Activated B cell treated with CpG ODN at 0.5 μM for 24 hours (primary cell): ENCODE measurements at regions of chr3 and their contacts with region 1.

Region 1: DNA sequence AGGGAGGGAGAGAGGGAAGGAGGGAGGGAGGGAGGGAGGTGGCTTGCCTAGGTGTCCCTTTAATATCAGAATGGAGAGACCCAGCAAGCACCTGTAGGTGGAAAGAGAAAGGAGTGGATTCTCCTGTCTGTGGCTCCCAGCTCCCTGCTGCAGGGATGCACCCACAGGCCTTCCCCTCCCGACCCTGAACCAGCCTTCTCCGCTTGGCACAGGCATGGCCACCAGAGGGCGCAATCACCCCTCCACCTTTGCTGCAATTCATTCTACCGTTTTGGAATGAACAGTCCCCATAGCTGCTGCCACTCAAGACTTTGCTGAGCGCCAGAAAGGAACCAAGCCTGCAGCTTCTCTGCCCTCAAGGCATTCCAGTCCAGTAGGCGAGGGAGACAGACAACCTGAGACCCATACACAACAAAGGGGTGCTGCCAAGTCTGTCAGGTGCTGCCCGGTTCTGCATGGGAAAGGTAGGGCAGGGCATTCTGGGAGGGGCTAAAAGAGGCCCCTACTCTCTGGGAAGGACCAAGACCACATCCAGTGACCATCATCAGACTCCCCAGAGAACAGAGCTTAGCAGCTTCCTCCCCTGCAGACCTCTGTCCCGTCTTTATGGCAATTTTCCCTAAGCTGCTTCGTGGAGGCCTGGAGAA is 4.9 kb downstream of the TLR9 start:
- DNase-seq: peak; percentile 80
- ATAC-seq: peak; percentile 59
- H3K4me3 Mint-ChIP-seq: peak overlapping the region; percentile 50
- H3K27ac Mint-ChIP-seq: peak overlapping the region; percentile 53
- H3K4me1 Mint-ChIP-seq: peaks cover 88% of the 10 kb centered on the region
- H3K27me3 Mint-ChIP-seq: no peaks in the 10 kb centered on the region
- CTCF ChIP-seq: no peak

Region 2: DNA sequence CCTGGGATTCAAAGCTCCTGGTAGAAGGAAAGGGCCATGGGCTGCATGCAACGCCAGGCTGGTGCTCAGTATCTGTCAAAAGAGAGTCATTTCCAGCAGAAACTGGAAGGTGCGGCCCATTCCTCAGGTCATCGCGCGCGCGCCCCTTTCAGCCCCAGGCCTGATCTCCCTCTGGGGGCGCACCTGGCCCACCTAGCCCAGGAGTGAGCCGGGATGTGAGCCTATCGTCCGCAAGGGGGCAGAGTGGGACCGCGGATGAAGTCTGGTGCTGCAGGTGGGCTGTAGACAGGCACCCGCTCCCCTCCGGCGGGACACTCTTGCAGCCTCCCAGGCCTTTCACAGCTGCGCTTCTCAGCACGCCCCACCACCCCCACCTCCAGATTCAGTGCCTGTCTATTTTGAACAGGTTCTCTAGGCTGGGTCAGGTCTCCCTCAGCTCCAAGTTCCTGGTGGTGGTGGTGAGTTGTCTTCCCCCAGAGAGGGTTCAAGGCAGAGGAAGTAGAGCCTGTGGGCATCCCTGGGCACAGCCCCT is 219.0 kb before region 1 on chr3:
- CTCF ChIA-PET with region 1: no interaction called
- POLR2A ChIA-PET with region 1: no interaction called
- intact Hi-C with region 1: loop called (anchors 5 kb)
- DNase-seq: peak; percentile 85
- ATAC-seq: peak; percentile 99
- H3K4me3 Mint-ChIP-seq: no peak overlapping the region
- H3K27ac Mint-ChIP-seq: no peak overlapping the region
- H3K4me1 Mint-ChIP-seq: peaks cover 5% of the 10 kb centered on the region
- H3K27me3 Mint-ChIP-seq: peaks cover 2% of the 10 kb centered on the region
- CTCF ChIP-seq: peak; percentile 56

Region 3: GRCh38 chr3:52231502-52232293 is 11.2 kb after region 1 on chr3:
- CTCF ChIA-PET with region 1: interaction called, 53 read pairs
- POLR2A ChIA-PET with region 1: interaction called, 147 read pairs
- intact Hi-C with region 1: no loop called
- DNase-seq: peak; percentile 89
- ATAC-seq: peak; percentile 90
- H3K4me3 Mint-ChIP-seq: no peak overlapping the region
- H3K27ac Mint-ChIP-seq: no peak overlapping the region
- H3K4me1 Mint-ChIP-seq: peaks cover 50% of the 10 kb centered on the region
- H3K27me3 Mint-ChIP-seq: no peaks in the 10 kb centered on the region
- CTCF ChIP-seq: peak; percentile 41

Region 4: DNA sequence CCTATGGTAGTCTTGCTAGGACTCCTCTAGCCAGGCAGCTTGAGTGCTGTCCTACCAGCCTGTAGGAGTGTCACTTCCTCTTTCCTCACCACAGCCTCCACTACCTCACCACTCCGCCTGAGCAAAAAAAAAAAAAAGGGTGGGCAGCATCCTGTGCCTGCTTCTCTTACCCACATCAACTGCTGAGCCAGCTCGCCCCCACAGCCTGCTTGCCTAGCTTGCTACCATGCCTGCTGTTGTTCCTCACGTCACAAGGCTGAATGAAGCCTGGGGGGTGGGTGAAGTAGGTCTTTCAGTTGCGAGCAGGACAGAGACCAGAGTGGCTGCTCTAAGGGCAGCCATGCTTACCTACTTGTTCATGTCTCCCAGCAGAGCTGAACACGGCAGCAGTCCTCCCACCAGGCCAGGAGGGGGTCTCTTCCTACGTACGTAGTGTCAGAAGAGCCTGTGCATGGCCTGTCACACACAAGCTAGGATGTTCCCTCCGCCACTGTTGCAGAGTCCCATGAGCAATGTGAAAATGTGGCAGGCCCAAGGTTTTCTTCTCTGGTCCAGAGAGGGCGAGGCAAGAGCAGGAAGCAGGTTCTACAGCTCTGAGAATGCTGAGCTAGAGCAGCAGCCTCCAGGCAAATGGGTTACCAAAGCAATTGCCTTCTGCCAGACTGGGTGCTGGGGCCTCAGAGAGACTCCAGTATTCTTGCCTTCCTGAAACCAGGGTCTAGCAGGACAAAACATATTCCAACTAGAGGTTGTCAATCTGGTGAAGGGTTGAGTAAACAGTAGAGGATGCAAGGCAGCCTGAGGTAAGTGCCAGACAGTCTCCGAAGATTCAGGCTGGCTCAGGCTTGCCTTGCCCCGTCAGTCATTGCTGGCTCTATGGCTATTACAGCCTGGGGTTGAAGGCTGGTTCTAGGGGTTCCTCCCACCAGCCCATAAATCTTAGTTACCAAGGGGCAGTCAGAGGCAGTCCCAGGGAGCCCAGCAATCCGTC is 33.1 kb after region 1 on chr3:
- CTCF ChIA-PET with region 1: interaction called, 32 read pairs
- POLR2A ChIA-PET with region 1: interaction called, 32 read pairs
- intact Hi-C with region 1: loop called (anchors 1 kb)
- DNase-seq: peak; percentile 58
- ATAC-seq: peak; percentile 96
- H3K4me3 Mint-ChIP-seq: peak overlapping the region; percentile 76
- H3K27ac Mint-ChIP-seq: peak overlapping the region; percentile 97
- H3K4me1 Mint-ChIP-seq: peaks cover 42% of the 10 kb centered on the region
- H3K27me3 Mint-ChIP-seq: no peaks in the 10 kb centered on the region
- CTCF ChIP-seq: no peak

Region 5: DNA sequence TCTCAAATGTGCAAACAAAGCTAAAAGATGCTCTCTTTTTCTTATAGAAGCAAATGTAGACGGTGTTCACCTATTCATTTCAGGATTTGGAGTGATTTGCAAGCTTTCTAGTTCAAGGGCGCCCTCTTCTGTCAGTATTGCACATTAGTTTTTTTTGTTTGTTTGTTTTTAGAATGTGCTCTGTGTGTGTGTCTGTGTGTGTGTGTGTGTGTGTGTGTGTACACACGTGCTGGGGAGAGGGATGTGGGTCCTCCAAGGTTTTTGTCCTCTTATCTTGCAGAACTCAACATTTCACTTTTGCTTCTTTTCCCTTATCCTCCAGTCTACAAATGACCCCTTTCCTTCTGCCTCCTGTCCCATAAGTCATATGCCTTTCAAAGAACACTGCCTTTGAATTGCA is 119.1 kb after region 1 on chr3:
- CTCF ChIA-PET with region 1: interaction called, 58 read pairs
- POLR2A ChIA-PET with region 1: interaction called, 8 read pairs
- intact Hi-C with region 1: loop called (anchors 1 kb)
- DNase-seq: no peak
- ATAC-seq: peak; percentile 40
- H3K4me3 Mint-ChIP-seq: no peak overlapping the region
- H3K27ac Mint-ChIP-seq: no peak overlapping the region
- H3K4me1 Mint-ChIP-seq: no peaks in the 10 kb centered on the region
- H3K27me3 Mint-ChIP-seq: no peaks in the 10 kb centered on the region
- CTCF ChIP-seq: peak; percentile 48

Region 6: GRCh38 chr3:52366527-52366926 is 146.0 kb after region 1 on chr3:
- CTCF ChIA-PET with region 1: no interaction called
- POLR2A ChIA-PET with region 1: no interaction called
- intact Hi-C with region 1: no loop called
- DNase-seq: no peak
- ATAC-seq: no peak
- H3K4me3 Mint-ChIP-seq: no peak overlapping the region
- H3K27ac Mint-ChIP-seq: no peak overlapping the region
- H3K4me1 Mint-ChIP-seq: no peaks in the 10 kb centered on the region
- H3K27me3 Mint-ChIP-seq: no peaks in the 10 kb centered on the region
- CTCF ChIP-seq: no peak

Region 7: GRCh38 chr3:52593103-52593502 is 372.6 kb after region 1 on chr3:
- CTCF ChIA-PET with region 1: no interaction called
- POLR2A ChIA-PET with region 1: no interaction called
- intact Hi-C with region 1: no loop called
- DNase-seq: no peak
- ATAC-seq: no peak
- H3K4me3 Mint-ChIP-seq: no peak overlapping the region
- H3K27ac Mint-ChIP-seq: no peak overlapping the region
- H3K4me1 Mint-ChIP-seq: no peaks in the 10 kb centered on the region
- H3K27me3 Mint-ChIP-seq: no peaks in the 10 kb centered on the region
- CTCF ChIP-seq: no peak